ENCODE measurements at regions of chr16 and their contacts with region 1.

Region 1: DNA sequence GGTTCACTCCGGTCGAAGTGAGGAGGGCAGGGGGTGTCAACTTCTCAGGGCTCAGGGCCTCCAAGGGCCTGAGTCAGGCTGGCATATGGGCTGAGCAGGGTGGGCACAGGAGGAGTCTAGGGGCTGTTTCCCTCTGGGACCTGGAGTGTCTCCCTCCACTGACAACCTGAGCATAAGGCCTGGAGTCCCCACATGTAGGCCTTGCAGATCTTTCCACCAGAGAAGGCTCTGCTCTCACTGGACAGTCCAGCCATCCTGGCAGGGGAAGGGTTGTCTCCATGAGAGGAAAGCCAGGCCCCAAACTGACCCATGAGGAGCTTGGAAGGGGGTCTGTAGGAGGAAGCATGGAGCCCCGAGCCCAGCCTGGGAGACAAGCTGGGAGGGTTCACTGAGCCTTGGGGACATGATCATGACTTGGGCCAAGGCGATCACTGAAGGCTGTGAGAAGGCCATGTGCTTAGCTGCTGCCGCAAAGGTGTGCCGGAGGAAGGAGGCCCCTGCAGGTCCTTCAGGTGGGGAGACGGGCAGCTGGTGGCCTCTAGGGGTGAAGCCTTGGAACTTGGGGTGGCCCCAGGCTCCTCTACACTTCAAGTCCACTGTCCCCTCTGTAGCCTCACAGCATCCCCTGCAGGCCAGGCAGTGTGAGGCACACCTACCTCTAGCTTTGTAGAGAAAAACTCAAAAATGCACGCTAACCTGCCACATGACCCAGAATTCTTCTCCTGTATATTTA is 9.9 kb downstream of the CMTM2 start:
- DNase-seq: peak; percentile 81
- CTCF ChIP-seq: peak; percentile 98

Region 2: GRCh38 chr16:66357153-66357928 is 231.8 kb before region 1 on chr16:
- CTCF ChIA-PET with region 1: interaction called, 10 read pairs
- POLR2A ChIA-PET with region 1: no interaction called
- DNase-seq: peak; percentile 71
- CTCF ChIP-seq: peak; percentile 79

Region 3: GRCh38 chr16:66521951-66522771 is 67.0 kb before region 1 on chr16:
- CTCF ChIA-PET with region 1: interaction called, 23 read pairs
- POLR2A ChIA-PET with region 1: no interaction called
- DNase-seq: peak; percentile 60
- CTCF ChIP-seq: no peak

Region 4: GRCh38 chr16:66562407-66562806 is 26.7 kb before region 1 on chr16:
- CTCF ChIA-PET with region 1: interaction called, 29 read pairs
- POLR2A ChIA-PET with region 1: no interaction called
- DNase-seq: no peak
- CTCF ChIP-seq: no peak

Region 5: GRCh38 chr16:66608241-66609138 is 19.3 kb after region 1 on chr16:
- CTCF ChIA-PET with region 1: interaction called, 12 read pairs
- POLR2A ChIA-PET with region 1: no interaction called
- DNase-seq: peak; percentile 90
- CTCF ChIP-seq: peak; percentile 86